HEK293 (cell line): ENCODE measurements at regions of chr6 and their contacts with region 1.

Region 1: DNA sequence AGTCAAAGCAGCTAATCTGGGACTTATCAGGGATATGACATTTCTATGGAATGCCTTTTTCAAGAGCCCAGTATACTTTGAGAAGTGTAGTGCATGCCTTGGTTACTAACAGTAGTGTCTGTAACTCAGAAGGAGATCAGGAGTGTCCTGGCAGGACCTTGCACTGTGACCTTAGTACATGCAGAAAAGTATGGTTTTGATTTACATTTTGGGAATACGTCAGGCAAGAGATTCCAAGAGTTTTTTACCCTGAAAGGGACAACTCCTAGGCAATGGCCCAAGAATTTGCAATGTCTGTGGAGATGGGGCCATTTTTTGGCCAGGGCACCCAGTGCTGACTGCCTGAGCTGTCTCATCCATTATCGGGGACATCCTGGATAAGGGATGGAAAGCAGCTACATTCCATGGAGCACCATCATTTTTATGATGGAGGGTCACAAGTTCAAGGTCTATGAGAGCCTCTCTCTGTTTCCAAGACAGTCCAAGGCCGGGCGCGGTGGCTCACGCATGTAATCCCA is 80.2 kb downstream of the FAM50B start:
- H3K4me3 ChIP-seq: no peak overlapping the region
- H3K27ac ChIP-seq: no peak overlapping the region
- H3K4me1 ChIP-seq: no peaks in the 10 kb centered on the region
- CTCF ChIP-seq: no peak

Region 2: GRCh38 chr6:3748208-3749066 is 180.9 kb before region 1 on chr6:
- CTCF ChIA-PET with region 1: interaction called, 60 read pairs
- POLR2A ChIA-PET with region 1: interaction called, 7 read pairs
- H3K4me3 ChIP-seq: no peak overlapping the region
- H3K27ac ChIP-seq: no peak overlapping the region
- H3K4me1 ChIP-seq: peaks cover 3% of the 10 kb centered on the region; the same call in 1 of the 2 replicates
- CTCF ChIP-seq: peak; percentile 76

Region 3: GRCh38 chr6:3835055-3835731 is 94.1 kb before region 1 on chr6:
- CTCF ChIA-PET with region 1: interaction called, 16 read pairs
- POLR2A ChIA-PET with region 1: no interaction called
- H3K4me3 ChIP-seq: no peak overlapping the region
- H3K27ac ChIP-seq: no peak overlapping the region
- H3K4me1 ChIP-seq: no peaks in the 10 kb centered on the region
- CTCF ChIP-seq: peak; percentile 40; the same call in 1 of the 2 replicates

Region 4: DNA sequence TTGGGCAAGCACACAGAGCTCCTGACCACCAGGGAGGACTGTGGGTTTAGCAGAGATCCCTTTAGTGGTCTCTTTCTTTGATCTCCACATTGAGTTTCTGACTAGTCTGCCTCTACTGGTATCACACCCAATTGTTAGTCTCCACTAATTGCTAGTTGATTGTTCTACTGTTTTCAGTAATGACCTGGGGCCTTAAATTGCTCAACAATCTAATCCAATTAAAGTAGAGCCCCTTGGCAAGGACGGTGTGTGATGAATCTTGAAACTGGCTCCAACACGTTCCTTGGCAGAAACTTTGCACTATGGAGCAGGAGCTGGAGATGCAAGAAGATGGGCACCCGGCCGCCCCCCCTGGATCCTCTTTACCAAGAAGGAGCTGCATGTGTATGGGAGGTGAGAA is 67.9 kb before region 1 on chr6:
- CTCF ChIA-PET with region 1: interaction called, 11 read pairs
- POLR2A ChIA-PET with region 1: no interaction called
- H3K4me3 ChIP-seq: no peak overlapping the region
- H3K27ac ChIP-seq: no peak overlapping the region
- H3K4me1 ChIP-seq: no peaks in the 10 kb centered on the region
- CTCF ChIP-seq: no peak

Region 5: DNA sequence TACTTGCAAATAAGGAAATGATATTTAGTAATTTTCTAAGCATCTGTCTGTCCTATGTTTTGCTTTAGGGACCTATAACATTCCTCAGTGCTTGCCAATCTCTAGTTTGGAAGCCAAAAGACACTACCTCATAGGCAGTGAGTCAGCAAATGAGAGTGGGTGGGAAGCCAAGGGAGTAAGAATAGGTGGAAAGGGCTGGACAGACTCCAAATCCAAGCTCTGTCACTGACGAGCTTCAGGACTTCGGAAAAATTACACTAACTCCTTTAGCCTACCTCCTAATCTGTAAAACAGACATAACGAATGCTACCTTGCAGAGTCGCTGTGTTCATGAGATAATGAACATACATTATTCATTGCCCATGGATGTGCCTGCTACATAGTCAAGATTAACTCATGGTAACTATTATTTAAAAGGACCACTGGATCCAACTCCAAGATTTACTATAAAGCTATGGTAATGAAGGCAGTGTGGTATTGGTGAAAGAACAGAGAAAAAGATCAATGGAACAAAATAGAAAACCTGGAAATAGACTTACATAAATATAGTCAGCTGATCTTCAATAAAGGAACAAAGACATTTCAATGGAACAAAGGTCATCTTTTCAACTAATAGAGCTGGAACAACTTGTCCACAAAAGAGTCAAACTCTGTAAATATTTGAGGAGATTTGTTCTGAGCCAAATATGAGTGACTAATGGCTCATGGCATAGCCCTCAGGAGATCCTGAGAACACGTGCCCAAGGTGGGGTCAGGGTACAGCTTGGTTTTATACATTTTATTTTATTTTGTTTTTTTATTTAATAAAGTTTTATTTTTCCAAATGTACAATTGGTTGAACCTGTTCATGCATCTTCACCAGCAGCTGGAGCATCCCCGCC is 16.0 kb before region 1 on chr6:
- CTCF ChIA-PET with region 1: interaction called, 37 read pairs
- POLR2A ChIA-PET with region 1: no interaction called
- H3K4me3 ChIP-seq: no peak overlapping the region
- H3K27ac ChIP-seq: peak overlapping the region; percentile 44
- H3K4me1 ChIP-seq: peaks cover 31% of the 10 kb centered on the region
- CTCF ChIP-seq: no peak

Region 6: GRCh38 chr6:4039348-4039747 is 110.0 kb after region 1 on chr6:
- CTCF ChIA-PET with region 1: no interaction called
- POLR2A ChIA-PET with region 1: no interaction called
- H3K4me3 ChIP-seq: no peak overlapping the region
- H3K27ac ChIP-seq: no peak overlapping the region
- H3K4me1 ChIP-seq: peaks cover 6% of the 10 kb centered on the region
- CTCF ChIP-seq: no peak

Region 7: DNA sequence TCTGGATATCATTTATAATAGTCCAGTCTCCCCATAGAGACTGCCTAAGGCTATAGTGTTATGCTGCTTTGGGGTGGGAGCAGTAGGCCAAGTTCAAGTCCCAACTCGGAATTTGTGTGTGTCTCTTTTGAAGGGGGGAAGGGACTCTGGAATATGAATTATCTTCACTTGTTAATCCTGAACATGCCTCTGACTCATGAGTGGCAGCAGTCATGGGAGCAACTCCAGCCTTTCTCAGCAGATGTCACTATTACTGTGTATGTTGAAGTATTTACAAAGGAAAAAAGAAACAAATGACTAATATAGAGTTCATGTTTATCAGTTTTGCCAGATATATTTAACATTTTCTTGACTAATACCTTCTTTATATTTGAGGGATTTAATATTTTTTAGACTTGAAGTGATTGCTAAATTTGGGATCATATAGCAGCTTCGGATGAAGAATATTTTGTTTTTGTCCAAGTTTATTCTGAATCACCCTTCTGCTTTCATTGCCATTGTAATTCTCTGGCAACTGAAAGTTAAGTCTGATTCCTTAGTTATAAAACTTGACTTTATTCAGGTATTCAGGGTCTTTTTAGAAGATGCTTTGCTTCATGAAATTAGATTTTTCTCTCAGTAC is 126.2 kb after region 1 on chr6:
- CTCF ChIA-PET with region 1: no interaction called
- POLR2A ChIA-PET with region 1: no interaction called
- H3K4me3 ChIP-seq: no peak overlapping the region
- H3K27ac ChIP-seq: no peak overlapping the region
- H3K4me1 ChIP-seq: peaks cover 7% of the 10 kb centered on the region; the same call in 1 of the 2 replicates
- CTCF ChIP-seq: 0 out of 2 replicates have a peak, but pooled peaks have one; percentile 39